ENCODE measurements at regions of chr18 and their contacts with region 1.

Region 1: DNA sequence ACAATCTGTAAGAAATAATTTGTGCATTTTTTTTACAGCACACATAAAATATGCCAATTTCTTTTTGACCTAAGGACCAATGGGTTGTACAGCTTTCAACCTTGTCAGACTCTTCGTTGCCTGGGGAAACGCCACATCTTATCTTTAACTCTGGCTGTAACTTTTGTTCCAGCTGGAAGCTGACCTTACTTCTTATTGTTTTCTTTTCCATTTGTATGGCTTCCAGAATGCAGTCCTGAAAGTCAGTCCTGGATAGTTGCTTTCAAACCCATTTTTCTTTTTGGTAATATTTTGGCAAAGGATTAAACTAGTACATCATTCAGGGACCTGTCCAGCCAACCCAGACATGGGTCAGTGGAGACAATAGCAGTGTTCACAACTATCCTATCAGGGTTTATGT is 686.5 kb upstream of the CDH2 start:
- DNase-seq: no peak
- ATAC-seq: peak in 2 of 4 donors; percentile 36 to 45
- H3K4me3 ChIP-seq: no peak overlapping the region
- H3K27ac ChIP-seq: no peak overlapping the region
- H3K4me1 ChIP-seq: no peaks in the 10 kb centered on the region
- H3K27me3 ChIP-seq: no peaks in the 10 kb centered on the region
- CTCF ChIP-seq: no peak
- POLR2A ChIP-seq: no peak

Region 2: GRCh38 chr18:28802546-28802945 is 60.9 kb before region 1 on chr18:
- intact Hi-C with region 1: loop called in 2 of 10 experiments (anchors 10 kb)
- DNase-seq: no peak
- ATAC-seq: no peak
- H3K4me3 ChIP-seq: no peak overlapping the region
- H3K27ac ChIP-seq: no peak overlapping the region
- H3K4me1 ChIP-seq: no peaks in the 10 kb centered on the region
- H3K27me3 ChIP-seq: no peaks in the 10 kb centered on the region
- CTCF ChIP-seq: no peak
- POLR2A ChIP-seq: no peak

Measured in heart left ventricle (tissue), 16 donors.